HEK293 (cell line): ENCODE measurements at regions of chr12 and their contacts with region 1.

Region 1: DNA sequence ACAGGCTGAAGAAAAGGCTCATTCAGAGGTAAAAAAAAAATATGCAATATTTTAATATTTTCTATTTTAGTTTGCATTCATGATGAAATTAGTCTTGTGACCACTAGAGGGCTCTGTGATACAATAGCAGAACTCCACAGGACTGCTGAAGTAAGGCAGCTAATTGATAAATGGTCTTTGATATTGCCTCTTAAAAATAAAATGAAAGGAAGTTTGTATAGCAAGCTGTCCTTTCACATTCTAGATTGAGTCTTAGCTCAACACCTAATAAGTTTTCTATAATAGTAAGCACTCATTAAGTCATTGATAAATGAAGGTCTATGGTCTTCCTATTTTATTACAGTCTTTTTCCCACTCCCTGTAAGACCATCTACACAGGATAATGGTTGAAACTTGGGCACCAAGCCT is 315.7 kb downstream of the NAV3 start:
- H3K4me3 ChIP-seq: no peak overlapping the region
- H3K27ac ChIP-seq: no peak overlapping the region
- H3K4me1 ChIP-seq: no peaks in the 10 kb centered on the region
- CTCF ChIP-seq: no peak

Region 2: GRCh38 chr12:78167510-78167909 is 21.1 kb after region 1 on chr12:
- CTCF ChIA-PET with region 1: interaction called, 11 read pairs
- POLR2A ChIA-PET with region 1: no interaction called
- H3K4me3 ChIP-seq: no peak overlapping the region
- H3K27ac ChIP-seq: no peak overlapping the region
- H3K4me1 ChIP-seq: peaks cover 3% of the 10 kb centered on the region; the same call in 1 of the 2 replicates
- CTCF ChIP-seq: no peak